ENCODE measurements at regions of chr1 and their contacts with region 1.

Region 1: DNA sequence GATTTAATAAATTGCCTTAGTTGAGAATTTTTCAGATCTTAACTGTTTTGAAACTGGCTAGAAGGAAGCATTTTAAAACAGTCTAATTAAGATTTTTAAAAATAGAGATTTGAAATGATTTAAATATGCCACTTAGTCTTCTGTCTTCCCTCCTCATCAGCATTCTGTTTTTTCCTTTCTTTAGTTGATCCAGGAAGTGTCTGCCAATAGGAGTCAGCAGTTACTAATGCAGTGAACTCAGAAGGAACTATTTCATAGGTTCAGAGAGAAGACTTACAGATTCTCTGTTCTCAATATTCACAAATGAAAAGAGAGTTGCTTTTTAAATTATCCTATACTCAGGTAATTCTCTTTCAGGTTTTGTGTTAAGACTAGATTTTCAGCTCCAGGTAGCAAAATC is 84.5 kb downstream of the RPS6KC1 start:
- DNase-seq: no peak
- H3K4me3 ChIP-seq: no peak overlapping the region
- H3K27ac ChIP-seq: no peak overlapping the region
- H3K4me1 ChIP-seq: no peaks in the 10 kb centered on the region
- H3K27me3 ChIP-seq: no peaks in the 10 kb centered on the region
- CTCF ChIP-seq: no peak

Region 2: GRCh38 chr1:213020016-213020415 is 115.6 kb before region 1 on chr1:
- CTCF ChIA-PET with region 1: no interaction called
- POLR2A ChIA-PET with region 1: no interaction called
- intact Hi-C with region 1: no loop called
- DNase-seq: no peak
- H3K4me3 ChIP-seq: no peak overlapping the region
- H3K27ac ChIP-seq: no peak overlapping the region
- H3K4me1 ChIP-seq: 0 out of 2 replicates have a peak, but pooled peaks cover 4% of the 10 kb centered on the region
- H3K27me3 ChIP-seq: 0 out of 2 replicates have a peak, but pooled peaks cover 4% of the 10 kb centered on the region
- CTCF ChIP-seq: no peak

Region 3: DNA sequence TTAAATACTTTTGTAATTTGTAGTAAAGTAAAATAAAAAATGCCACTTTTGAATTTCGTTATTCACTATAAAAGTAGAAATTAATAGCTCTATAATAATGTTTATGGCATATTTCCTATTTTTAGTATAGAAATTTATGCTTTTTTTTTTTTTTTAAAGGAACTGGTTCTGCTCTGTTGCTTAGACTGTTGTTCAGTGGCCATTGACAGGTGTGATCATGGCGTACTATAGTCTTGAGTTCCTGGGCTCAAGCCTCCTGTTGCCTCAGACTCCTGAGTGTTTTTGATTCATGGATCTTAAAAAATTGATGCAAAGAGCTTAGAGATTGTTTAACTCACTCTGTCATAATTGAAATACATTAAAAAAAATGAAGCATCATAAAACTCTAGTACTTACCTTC is 31.0 kb before region 1 on chr1:
- CTCF ChIA-PET with region 1: no interaction called
- POLR2A ChIA-PET with region 1: no interaction called
- intact Hi-C with region 1: loop called (anchors 5 kb)
- DNase-seq: no peak
- H3K4me3 ChIP-seq: no peak overlapping the region
- H3K27ac ChIP-seq: no peak overlapping the region
- H3K4me1 ChIP-seq: no peaks in the 10 kb centered on the region
- H3K27me3 ChIP-seq: no peaks in the 10 kb centered on the region
- CTCF ChIP-seq: no peak

Region 4: DNA sequence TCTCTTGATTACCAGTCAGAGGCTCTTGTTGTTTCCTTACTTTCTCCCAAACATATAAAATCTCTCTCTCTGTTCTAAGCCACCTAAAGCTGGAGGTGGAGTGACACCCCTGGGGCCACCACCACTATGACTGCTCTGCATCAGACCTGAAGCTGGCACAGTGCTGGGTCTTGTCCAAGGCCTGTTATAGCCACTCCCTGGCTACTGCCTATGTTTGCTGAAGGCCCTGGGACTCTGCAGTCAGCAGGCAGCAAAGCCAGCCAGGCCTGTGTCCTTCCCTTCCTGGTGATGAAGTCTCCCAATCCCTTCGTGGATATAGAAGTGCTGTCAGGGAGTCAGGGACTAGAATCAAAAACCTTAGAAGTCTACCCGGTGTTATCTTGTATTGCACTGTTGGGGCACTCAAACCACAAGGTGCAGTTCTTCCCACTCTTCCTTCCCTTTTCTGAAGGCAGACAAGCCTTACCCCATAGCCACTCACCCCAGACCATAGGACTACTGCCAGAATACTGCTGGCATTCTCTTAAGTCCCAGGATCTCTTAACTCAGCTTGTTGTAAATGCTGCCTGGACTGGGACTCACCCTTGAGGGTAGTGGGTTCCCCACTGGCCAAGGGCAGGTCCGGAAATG is 18.6 kb after region 1 on chr1:
- CTCF ChIA-PET with region 1: no interaction called
- POLR2A ChIA-PET with region 1: no interaction called
- intact Hi-C with region 1: no loop called
- DNase-seq: no peak
- H3K4me3 ChIP-seq: no peak overlapping the region
- H3K27ac ChIP-seq: no peak overlapping the region
- H3K4me1 ChIP-seq: no peaks in the 10 kb centered on the region
- H3K27me3 ChIP-seq: no peaks in the 10 kb centered on the region
- CTCF ChIP-seq: no peak